ENCODE measurements at regions of chr1 and their contacts with region 1.

Region 1: GRCh38 chr1:983799-984473 is 2.0 kb upstream of the PERM1 start:
- DNase-seq: peak; percentile 80
- ATAC-seq: peak; percentile 82
- H3K4me3 Mint-ChIP-seq: no peak overlapping the region
- H3K27ac Mint-ChIP-seq: no peak overlapping the region
- H3K4me1 Mint-ChIP-seq: no peaks in the 10 kb centered on the region
- H3K27me3 Mint-ChIP-seq: peaks cover 18% of the 10 kb centered on the region

Region 2: GRCh38 chr1:1291548-1292441 is 307.9 kb after region 1 on chr1:
- CTCF ChIA-PET with region 1: no interaction called
- POLR2A ChIA-PET with region 1: no interaction called
- intact Hi-C with region 1: loop called in 1 of 2 experiments (anchors 5 kb)
- DNase-seq: peak; percentile 74
- ATAC-seq: peak; percentile 72
- H3K4me3 Mint-ChIP-seq: no peak overlapping the region
- H3K27ac Mint-ChIP-seq: no peak overlapping the region
- H3K4me1 Mint-ChIP-seq: no peaks in the 10 kb centered on the region
- H3K27me3 Mint-ChIP-seq: no peaks in the 10 kb centered on the region

Region 3: DNA sequence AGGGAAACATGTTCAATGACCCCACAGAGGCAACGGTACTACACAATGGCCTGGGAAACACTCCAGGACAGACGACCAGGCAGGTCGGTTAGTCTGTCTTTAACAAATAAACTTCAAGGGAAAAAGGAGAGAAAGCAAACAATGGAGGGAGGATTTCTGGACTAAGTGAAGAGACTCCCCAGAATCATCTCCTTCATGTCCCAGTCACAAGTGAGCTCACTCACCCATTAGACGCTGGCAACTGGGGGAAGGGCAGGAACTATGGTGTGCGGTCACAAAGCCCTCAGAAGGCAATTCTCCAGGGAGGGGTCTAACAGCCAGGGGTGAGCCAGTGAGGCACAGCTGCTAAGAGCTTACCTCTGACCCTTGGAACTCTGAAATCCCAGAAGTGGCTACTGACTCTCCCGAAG is 850.0 kb after region 1 on chr1:
- CTCF ChIA-PET with region 1: no interaction called
- POLR2A ChIA-PET with region 1: no interaction called
- intact Hi-C with region 1: no loop called
- DNase-seq: no peak
- ATAC-seq: no peak
- H3K4me3 Mint-ChIP-seq: no peak overlapping the region
- H3K27ac Mint-ChIP-seq: no peak overlapping the region
- H3K4me1 Mint-ChIP-seq: peaks cover 28% of the 10 kb centered on the region
- H3K27me3 Mint-ChIP-seq: no peaks in the 10 kb centered on the region